ENCODE measurements at regions of chrX and their contacts with region 1.

Region 1: DNA sequence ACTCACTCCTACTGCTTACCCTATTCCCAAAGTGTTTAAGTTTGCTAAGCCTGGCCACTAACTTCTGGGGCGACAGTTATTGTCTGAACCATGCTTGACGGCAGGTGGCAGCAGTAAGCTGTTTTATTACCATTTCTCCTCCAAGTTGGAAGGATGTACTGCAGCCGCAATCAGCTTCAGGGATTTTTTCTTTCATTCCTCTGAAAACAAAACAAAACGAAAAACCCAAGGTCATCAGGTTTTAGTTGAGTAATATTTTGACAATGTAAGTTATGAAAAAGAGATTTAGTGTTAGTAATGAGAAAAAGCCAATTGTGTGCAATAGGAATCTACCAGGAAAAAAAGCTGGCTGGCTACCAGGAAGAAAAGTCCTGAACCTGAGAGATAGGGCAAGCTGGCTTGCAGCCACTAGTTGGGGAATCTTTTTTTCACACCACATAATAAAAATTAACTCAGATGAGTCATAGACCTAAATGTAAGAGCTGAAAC is 13.2 kb upstream of the RAB9B start:
- DNase-seq: peak; percentile 44 to 64
- ATAC-seq: peak; percentile 95
- H3K4me3 ChIP-seq: no peak overlapping the region
- H3K27ac ChIP-seq: no peak overlapping the region
- H3K4me1 ChIP-seq: no peaks in the 10 kb centered on the region
- CTCF ChIP-seq: peak; percentile 66
- EP300 ChIP-seq: no peak
- POLR2A ChIP-seq: no peak
- RAD21 ChIP-seq: peak; percentile 63 to 67

Region 2: GRCh38 chrX:103831803-103832544 is 13.2 kb before region 1 on chrX and contains the start of gene RAB9B:
- CTCF ChIA-PET with region 1: interaction called, 11 read pairs
- POLR2A ChIA-PET with region 1: no interaction called
- DNase-seq: no peak
- ATAC-seq: peak; percentile 88 to 97
- H3K4me3 ChIP-seq: peak within 1 kb of the TSS; percentile 59
- H3K27ac ChIP-seq: peak within 1 kb of the TSS in 1 of 2 experiments; percentile 75; a peak in 4 of 6 replicates
- H3K4me1 ChIP-seq: no peaks in the 10 kb centered on the region
- CTCF ChIP-seq: no peak
- EP300 ChIP-seq: no peak
- POLR2A ChIP-seq: no peak
- RAD21 ChIP-seq: no peak
- polyA plus RNA-seq, gene RAB9B: 0.15 and 0.16 TPM in 2 replicates

Region 3: GRCh38 chrX:103861200-103861599 is 16.0 kb after region 1 on chrX:
- CTCF ChIA-PET with region 1: interaction called, 11 read pairs
- POLR2A ChIA-PET with region 1: no interaction called
- DNase-seq: no peak
- ATAC-seq: no peak
- H3K4me3 ChIP-seq: no peak overlapping the region
- H3K27ac ChIP-seq: no peak overlapping the region
- H3K4me1 ChIP-seq: no peaks in the 10 kb centered on the region
- CTCF ChIP-seq: no peak
- EP300 ChIP-seq: no peak
- POLR2A ChIP-seq: no peak
- RAD21 ChIP-seq: no peak

Region 4: DNA sequence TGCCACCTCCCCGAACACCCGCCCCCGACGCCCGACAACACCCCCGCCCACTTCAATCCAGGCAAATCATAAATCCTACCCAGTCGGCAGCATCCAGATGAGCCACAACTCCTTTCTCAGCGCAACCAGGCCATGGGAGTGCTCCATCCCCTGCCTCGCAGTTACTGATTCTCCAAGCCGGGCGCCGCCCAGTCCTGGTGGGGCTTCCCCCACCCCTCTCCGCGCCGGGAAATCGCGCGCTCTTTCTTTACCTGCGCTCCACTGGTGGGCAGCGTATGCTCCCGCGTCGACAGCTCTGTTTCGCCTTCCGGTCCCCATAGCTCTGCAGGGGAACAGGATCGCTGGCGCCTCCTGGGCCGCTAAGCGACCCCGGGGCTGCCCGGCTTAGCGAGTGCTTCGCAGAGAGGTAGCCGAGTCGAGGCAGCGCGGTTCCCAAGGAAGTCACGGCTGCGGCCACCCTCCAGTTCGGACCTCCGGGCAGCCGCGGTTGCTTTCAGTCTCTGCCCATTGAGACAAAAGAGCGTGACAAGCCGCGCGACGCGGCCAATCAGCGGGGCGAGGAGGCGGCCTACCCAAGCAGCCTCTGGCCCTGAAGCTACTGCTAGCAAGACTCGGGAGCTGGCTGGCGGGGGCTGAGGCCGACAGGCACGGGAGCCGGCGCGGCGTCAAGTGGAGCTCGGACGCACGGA is 73.5 kb after region 1 on chrX:
- CTCF ChIA-PET with region 1: interaction called, 12 read pairs
- POLR2A ChIA-PET with region 1: interaction called, 4 read pairs
- DNase-seq: peak; percentile 58 to 75
- ATAC-seq: peak; percentile 85 to 90
- H3K4me3 ChIP-seq: peak overlapping the region; percentile 63
- H3K27ac ChIP-seq: peak overlapping the region; percentile 68 to 90
- H3K4me1 ChIP-seq: 0 out of 3 replicates have a peak, but pooled peaks cover 2% of the 10 kb centered on the region
- CTCF ChIP-seq: no peak
- EP300 ChIP-seq: no peak
- POLR2A ChIP-seq: peak; percentile 24; the same call in 1 of the 2 replicates
- RAD21 ChIP-seq: no peak

Region 5: DNA sequence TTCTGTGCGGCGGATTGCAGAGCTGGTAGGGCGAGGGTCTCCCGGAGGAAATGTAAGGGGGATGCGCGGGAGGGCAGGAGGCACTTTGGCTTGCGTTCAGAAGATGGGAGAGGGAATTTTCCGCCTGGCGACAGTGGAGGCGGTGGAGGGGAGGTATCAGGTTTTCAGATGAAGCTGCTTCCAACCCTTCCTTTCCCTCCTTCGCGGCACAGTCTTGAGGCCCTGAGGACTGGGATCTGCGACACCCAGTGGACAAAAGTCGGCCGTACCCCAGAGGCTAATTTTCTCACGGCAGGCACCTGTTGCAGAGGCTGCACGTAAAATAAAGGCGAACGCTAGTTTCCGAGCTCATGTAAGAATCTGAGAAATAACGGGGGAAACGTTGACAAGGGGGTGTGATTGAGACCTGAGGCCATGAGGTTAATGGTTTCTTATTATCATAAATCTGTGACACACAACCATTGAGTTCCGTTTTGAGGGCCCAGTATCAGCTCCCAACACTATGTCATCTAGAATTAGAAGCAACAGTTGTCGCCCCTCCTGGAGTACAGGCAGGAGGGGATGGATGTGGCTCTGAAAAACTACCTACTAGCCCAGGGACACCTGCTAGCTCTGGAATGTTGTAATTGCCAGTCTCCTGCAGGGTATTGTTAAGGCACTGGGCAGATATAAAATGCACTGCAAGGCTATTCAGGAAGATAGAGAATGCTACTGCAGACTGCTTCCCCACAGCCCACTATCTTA is 268.2 kb after region 1 on chrX:
- CTCF ChIA-PET with region 1: interaction called, 18 read pairs
- POLR2A ChIA-PET with region 1: no interaction called
- DNase-seq: peak; percentile 29 to 69
- ATAC-seq: peak; percentile 85 to 94
- H3K4me3 ChIP-seq: peak overlapping the region; percentile 60
- H3K27ac ChIP-seq: 0 out of 6 replicates have a peak overlapping the region, but pooled peaks of 1 of the 2 experiments have one; percentile 66
- H3K4me1 ChIP-seq: no peaks in the 10 kb centered on the region
- CTCF ChIP-seq: peak; percentile 49
- EP300 ChIP-seq: no peak
- POLR2A ChIP-seq: no peak
- RAD21 ChIP-seq: peak; percentile 43 to 52; a peak in 3 of 5 replicates

Region 6: DNA sequence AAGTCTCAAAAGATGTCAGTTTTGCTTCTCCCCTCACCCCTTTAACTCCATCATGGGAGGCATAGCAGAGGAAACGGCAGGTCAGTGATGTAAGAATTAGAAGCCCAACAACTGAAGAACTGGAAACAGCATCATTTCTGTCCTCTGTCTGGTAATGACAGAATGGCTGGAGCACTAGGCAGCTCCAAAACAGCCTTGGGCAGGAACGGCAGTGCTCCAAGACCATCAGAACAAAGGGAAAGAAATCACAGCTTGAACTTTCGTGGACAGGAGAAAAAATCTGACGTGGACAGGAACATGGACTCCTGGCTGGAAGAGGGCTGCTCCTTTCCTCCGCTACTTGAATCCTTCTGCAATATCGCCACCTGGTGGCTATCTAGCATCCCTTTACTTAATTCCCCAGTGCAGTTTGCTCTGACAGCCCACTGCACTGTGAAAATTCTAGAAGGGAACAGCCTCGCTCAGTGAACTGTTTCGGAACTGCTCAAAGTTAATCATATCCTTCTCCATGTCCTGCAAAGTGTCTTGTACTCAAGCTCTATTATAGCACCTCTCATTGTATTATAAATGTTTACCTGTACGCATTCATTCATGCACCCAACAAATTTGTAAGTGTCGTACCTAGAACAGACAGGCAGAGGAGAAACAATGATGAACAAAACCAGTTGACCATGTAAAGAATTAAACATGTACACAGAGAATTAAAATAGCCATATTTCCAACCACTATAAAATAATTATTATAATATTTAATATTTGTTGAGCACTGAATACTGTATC is 291.2 kb after region 1 on chrX:
- CTCF ChIA-PET with region 1: interaction called, 10 read pairs
- POLR2A ChIA-PET with region 1: no interaction called
- DNase-seq: peak; percentile 70 to 87
- ATAC-seq: peak; percentile 99
- H3K4me3 ChIP-seq: peak overlapping the region; percentile 50
- H3K27ac ChIP-seq: peak overlapping the region; percentile 59 to 73; a peak in 4 of 6 replicates
- H3K4me1 ChIP-seq: no peaks in the 10 kb centered on the region
- CTCF ChIP-seq: peak; percentile 70
- EP300 ChIP-seq: no peak
- POLR2A ChIP-seq: no peak
- RAD21 ChIP-seq: peak; percentile 62 to 66